Natural killer cell (primary cell): ENCODE measurements at regions of chr7 and their contacts with region 1.

Region 1: GRCh38 chr7:2523941-2524807 is 4.6 kb downstream of the LFNG start:
- DNase-seq: peak in 1 of 2 donors; percentile 34
- ATAC-seq: no peak
- H3K4me3 ChIP-seq: no peak overlapping the region
- H3K4me3 Mint-ChIP-seq: peak overlapping the region; percentile 92
- H3K27ac ChIP-seq: peak overlapping the region; percentile 41
- H3K27ac Mint-ChIP-seq: peak overlapping the region; percentile 94 to 97
- H3K4me1 ChIP-seq: peaks cover 80% of the 10 kb centered on the region
- H3K4me1 Mint-ChIP-seq: peaks cover 36 to 52% of the 10 kb centered on the region in 2 donors
- H3K27me3 ChIP-seq: no peaks in the 10 kb centered on the region
- H3K27me3 Mint-ChIP-seq: no peaks in the 10 kb centered on the region
- CTCF ChIP-seq: no peak

Region 2: GRCh38 chr7:2465928-2466327 is 58.2 kb before region 1 on chr7:
- intact Hi-C with region 1: no loop called
- DNase-seq: no peak
- ATAC-seq: no peak
- H3K4me3 ChIP-seq: no peak overlapping the region
- H3K4me3 Mint-ChIP-seq: no peak overlapping the region
- H3K27ac ChIP-seq: no peak overlapping the region
- H3K27ac Mint-ChIP-seq: no peak overlapping the region
- H3K4me1 ChIP-seq: peaks cover 8% of the 10 kb centered on the region
- H3K4me1 Mint-ChIP-seq: peaks cover 5 to 6% of the 10 kb centered on the region in 2 donors
- H3K27me3 ChIP-seq: no peaks in the 10 kb centered on the region
- H3K27me3 Mint-ChIP-seq: peaks cover 7 to 9% of the 10 kb centered on the region in 2 donors
- CTCF ChIP-seq: no peak

Region 3: GRCh38 chr7:2632733-2633537 is 108.8 kb after region 1 on chr7:
- intact Hi-C with region 1: loop called (anchors 5 kb)
- DNase-seq: peak; percentile 44 to 52
- ATAC-seq: peak in 1 of 3 donors; percentile 2
- H3K4me3 ChIP-seq: peak overlapping the region; percentile 51
- H3K4me3 Mint-ChIP-seq: peak overlapping the region; percentile 93
- H3K27ac ChIP-seq: peak overlapping the region; percentile 53
- H3K27ac Mint-ChIP-seq: peak overlapping the region; percentile 72 to 92
- H3K4me1 ChIP-seq: peaks cover 46% of the 10 kb centered on the region
- H3K4me1 Mint-ChIP-seq: peaks cover 10 to 34% of the 10 kb centered on the region in 2 donors
- H3K27me3 ChIP-seq: no peaks in the 10 kb centered on the region
- H3K27me3 Mint-ChIP-seq: no peaks in the 10 kb centered on the region
- CTCF ChIP-seq: no peak